Kidney (tissue), 22 donors: ENCODE measurements at regions of chr1 and their contacts with region 1.

Region 1: DNA sequence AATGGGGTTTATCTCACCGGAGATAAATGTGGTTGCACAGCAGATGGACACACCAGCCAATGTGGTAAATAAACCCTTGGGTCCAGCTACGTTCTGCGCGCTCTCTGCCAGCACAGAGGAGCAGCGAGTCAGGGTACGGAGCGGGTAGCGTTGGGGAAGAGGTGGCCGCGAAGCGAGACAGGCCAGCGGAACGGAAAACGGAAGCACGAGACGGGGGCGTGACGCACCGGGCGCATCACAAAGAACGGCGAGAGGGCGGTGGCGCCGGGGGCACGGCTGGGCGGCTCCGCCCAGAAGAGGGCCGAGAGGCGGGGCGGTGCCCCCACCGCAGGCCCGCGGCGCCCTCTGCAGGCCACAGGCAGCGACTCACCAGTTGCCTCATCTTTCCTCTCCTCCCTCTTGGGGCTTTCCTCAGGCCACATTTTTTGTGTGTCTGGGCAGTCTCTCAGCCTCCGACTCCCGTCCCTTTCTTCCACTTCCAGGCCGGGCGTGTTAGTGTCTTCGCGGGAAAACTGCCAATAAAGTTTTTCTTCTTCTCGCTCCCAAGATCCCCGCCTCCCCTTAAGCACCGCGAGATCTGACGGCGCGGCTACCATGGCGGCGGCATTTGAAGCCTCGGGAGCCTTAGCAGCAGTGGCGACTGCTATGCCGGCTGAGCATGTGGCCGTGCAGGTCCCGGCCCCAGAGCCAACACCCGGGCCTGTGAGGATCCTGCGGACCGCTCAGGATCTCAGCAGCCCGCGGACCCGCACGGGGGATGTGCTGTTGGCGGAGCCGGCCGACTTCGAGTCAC is at the start of gene DDX20:
- DNase-seq: peak; percentile 95 to 99 (median 97)
- H3K4me3 ChIP-seq: peak within 1 kb of the TSS; percentile 82 to 98 (median 85)
- H3K27ac ChIP-seq: peak within 1 kb of the TSS; percentile 82 to 87
- H3K4me1 ChIP-seq: peaks cover 3 to 8% (median 8%) of the 10 kb centered on the region in 3 donors
- H3K27me3 ChIP-seq: no peaks in the 10 kb centered on the region
- CTCF ChIP-seq: peak; percentile 71
- total RNA-seq, gene DDX20: 9.6 TPM

Region 2: GRCh38 chr1:111481387-111482221 is 273.9 kb before region 1 on chr1:
- intact Hi-C with region 1: loop called (anchors 10 kb)
- DNase-seq: peak; percentile 74 to 88 (median 84)
- H3K4me3 ChIP-seq: no peak overlapping the region
- H3K27ac ChIP-seq: no peak overlapping the region
- H3K4me1 ChIP-seq: no peaks in the 10 kb centered on the region
- H3K27me3 ChIP-seq: no peaks in the 10 kb centered on the region
- CTCF ChIP-seq: peak; percentile 78

Region 3: DNA sequence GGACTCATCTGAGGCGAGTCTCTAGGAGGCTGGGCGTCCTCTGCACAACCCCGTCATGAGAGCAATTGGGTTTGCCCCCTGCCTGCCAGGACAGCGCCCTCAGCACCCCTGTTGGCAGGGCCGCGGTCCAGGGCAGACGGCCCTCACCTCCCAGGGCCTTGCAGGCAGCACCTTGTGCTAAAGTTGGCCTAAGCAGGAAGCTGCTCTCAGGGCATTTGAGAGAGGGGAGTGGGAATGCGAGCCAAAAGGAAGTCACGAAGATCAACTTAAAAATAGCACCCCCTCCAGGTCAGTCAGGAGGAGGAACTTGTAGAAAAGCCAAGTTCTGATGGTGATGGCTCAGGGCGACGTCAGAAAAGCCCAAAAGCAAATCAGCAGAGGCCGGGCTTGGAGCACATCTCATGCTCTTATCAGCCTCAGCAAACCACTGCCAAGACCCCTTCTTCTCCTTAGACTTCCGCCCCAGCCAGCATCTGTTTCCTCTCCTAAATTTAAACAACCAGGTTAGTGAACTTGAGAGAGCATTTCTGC is 239.5 kb before region 1 on chr1:
- intact Hi-C with region 1: loop called (anchors 10 kb)
- DNase-seq: peak in 4 of 5 donors; percentile 38 to 84 (median 70)
- H3K4me3 ChIP-seq: peak overlapping the region in 1 of 3 donors; percentile 59
- H3K27ac ChIP-seq: peak overlapping the region; percentile 68 to 72
- H3K4me1 ChIP-seq: peaks cover 0 to 9% (median 7%) of the 10 kb centered on the region in 3 donors
- H3K27me3 ChIP-seq: no peaks in the 10 kb centered on the region
- CTCF ChIP-seq: peak; percentile 1